Head of caudate nucleus (tissue), 42 donors: ENCODE measurements at regions of chr15 and their contacts with region 1.

Region 1: DNA sequence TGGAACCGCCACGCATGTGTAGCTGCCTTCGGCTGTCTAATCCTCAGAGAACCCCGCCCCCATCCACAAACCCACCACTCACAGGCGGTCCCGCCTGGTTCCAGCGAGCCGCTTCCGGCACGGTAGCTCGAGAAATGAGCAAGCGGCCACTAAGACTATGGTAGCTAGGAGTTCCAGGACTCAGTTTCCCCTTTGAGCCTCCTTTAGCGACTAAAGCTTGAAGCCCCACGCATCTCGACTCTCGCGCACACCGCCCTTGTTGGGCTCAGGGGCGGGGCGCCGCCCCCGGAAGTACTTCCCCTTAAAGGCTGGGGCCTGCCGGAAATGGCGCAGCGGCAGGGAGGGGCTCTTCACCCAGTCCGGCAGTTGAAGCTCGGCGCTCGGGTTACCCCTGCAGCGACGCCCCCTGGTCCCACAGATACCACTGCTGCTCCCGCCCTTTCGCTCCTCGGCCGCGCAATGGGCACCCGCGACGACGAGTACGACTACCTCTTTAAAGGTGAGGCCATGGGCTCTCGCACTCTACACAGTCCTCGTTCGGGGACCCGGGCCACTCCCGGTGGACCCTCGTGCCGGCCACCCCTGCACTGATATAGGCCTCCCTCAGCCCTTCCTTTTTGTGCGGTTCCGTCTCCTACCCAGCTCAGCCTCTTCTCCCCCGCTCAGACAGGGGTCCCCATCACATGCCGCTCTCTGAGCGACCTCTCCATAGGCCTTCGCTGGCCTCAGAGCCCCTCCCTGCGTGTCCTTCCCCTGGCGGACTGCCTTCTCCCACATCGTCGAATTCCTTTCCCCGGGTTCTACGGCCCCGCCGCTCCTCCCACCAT is at the start of gene RAB11A:
- DNase-seq: peak; percentile 92 to 99 (median 97)

Region 2: DNA sequence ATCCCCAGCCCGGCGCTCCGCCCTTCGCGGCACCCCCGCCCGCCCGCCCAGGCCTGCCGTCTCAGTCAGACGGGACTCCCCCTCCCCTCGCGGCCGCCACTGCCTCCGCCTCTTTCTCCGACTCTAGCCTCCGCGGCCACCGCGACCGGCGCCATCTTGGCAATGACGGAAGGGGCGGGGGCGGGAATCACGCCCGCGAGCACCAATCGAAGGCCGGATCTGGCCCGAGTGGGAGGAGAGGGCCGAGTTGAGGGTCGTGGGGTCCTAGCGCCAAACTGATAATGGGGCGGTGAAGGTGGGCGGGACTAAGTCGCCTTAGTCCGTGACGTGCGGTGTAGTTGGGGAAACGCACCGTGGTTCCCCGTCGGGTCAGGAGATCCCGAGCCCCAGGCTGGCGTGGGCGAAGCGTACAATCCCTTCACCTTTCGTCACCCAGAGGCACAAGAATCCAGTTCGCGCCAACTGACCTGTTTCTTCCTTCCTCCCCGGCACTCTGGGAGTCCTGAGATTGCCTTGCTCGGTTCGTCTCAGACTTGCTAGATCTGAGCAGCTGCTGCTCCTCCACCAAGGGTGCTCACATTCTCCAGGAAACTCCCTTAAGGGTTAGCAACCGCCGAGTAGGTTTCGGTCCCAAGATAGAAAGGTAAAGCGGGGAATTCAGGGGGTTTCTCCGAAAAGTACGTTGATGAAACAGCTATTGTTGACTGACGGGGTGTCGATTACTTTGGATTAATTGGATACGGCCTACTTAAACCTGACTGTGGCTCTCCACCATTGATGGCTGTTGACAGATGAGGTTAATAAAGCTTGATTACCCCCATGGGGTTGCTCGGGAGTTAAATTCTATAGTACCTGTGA is 77.0 kb before region 1 on chr15 and contains the start of gene DENND4A:
- intact Hi-C with region 1: loop called (anchors 5 kb)
- DNase-seq: peak; percentile 94 to 99 (median 98)

Region 3: GRCh38 chr15:66025015-66025452 is 155.7 kb after region 1 on chr15:
- intact Hi-C with region 1: no loop called
- DNase-seq: peak in 22 of 42 donors; percentile 7 to 67 (median 24)